Posterior vena cava (tissue), 2 donors: ENCODE measurements at regions of chr16 and their contacts with region 1.

Region 1: GRCh38 chr16:5234295-5235050 is 136.9 kb upstream of the EEF2KMT start:
- DNase-seq: no peak

Region 2: GRCh38 chr16:5490499-5490898 is 256.0 kb after region 1 on chr16:
- intact Hi-C with region 1: loop called in 1 of 2 experiments (anchors 5 kb)
- DNase-seq: no peak

Region 3: GRCh38 chr16:5738592-5738991 is 504.1 kb after region 1 on chr16:
- intact Hi-C with region 1: loop called in 1 of 2 experiments (anchors 5 kb)
- DNase-seq: no peak